ENCODE measurements at regions of chr6 and their contacts with region 1.

Region 1: GRCh38 chr6:41779793-41780545 is at the start of gene FRS3:
- DNase-seq: peak; percentile 90
- H3K4me3 Mint-ChIP-seq: peak within 1 kb of the TSS; percentile 90
- H3K27ac Mint-ChIP-seq: no peak within 1 kb of the TSS
- H3K4me1 Mint-ChIP-seq: peaks cover 23% of the 10 kb centered on the region
- H3K27me3 Mint-ChIP-seq: no peaks in the 10 kb centered on the region
- CTCF ChIP-seq: peak; percentile 94
- total RNA-seq, gene FRS3: 3.9 and 5.3 TPM in 2 replicates

Region 2: DNA sequence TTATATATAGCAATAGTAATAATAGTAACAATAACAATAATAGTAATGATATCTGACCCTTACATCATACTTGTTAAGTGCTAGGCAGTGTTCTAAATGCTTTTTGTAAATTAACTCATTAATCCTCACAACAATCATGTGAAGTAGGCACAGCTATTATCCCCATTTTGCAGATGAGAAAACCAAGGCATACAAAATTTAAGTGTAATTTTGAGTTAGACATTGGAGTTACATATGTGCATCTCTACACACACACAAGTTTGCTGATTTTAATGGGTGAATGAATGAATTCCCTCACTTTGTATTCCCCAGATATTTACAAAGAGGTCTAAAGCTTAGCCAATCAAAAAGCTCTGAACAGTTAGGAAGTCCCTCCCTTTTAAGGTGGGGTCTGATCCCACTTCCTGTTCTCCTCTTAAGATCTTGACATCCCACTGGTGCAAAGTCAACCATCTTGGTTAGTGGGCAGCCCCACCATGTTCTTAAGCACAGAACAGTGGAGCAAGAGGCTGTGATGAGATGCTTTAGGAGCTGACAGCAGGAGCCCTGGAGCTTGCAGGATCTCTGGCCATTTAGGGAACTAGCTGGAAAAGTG is 319.1 kb before region 1 on chr6:
- CTCF ChIA-PET with region 1: no interaction called
- POLR2A ChIA-PET with region 1: no interaction called
- intact Hi-C with region 1: no loop called
- DNase-seq: no peak
- H3K4me3 Mint-ChIP-seq: no peak overlapping the region
- H3K27ac Mint-ChIP-seq: no peak overlapping the region
- H3K4me1 Mint-ChIP-seq: no peaks in the 10 kb centered on the region
- H3K27me3 Mint-ChIP-seq: peaks cover 36% of the 10 kb centered on the region
- CTCF ChIP-seq: no peak

Region 3: DNA sequence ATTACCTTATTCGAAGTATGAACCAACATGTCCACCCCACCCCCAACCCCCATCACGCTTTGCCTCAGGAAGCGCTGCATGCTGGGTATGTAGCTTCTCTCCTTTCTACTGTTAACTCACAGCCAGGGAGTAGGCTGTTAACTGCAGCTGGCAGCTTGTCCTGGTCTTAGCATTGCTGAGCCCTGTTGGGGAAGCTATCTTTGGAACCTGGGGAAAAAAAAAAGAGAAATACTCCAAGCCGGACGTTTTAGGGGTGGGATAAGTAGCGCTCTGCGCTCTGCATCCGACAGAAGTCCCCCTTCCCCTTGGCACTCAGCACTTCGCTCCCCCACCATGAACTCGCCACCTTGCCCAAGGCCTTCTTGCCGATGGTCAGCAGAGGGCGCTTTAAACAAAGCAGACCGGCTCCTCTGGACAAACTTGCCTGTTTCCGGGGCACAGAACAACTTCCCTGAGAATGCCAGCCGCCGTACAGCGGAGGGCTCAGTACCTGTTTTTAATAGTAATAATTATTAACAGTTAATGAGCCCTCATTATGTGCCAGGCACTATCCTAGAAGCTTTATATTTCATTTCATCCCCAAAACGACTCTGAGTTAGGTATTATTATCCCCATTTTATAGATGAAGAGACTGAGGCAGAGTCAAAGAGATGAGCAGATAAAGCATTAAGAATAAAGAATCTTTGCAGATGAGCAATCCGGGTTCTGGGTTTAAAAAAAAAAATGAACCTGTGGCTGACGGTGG is 176.9 kb before region 1 on chr6:
- CTCF ChIA-PET with region 1: interaction called, 17 read pairs
- POLR2A ChIA-PET with region 1: interaction called, 3 read pairs
- intact Hi-C with region 1: loop called (anchors 1 kb)
- DNase-seq: peak; percentile 87
- H3K4me3 Mint-ChIP-seq: no peak overlapping the region
- H3K27ac Mint-ChIP-seq: no peak overlapping the region
- H3K4me1 Mint-ChIP-seq: peaks cover 5% of the 10 kb centered on the region
- H3K27me3 Mint-ChIP-seq: no peaks in the 10 kb centered on the region
- CTCF ChIP-seq: peak; percentile 90

Region 4: DNA sequence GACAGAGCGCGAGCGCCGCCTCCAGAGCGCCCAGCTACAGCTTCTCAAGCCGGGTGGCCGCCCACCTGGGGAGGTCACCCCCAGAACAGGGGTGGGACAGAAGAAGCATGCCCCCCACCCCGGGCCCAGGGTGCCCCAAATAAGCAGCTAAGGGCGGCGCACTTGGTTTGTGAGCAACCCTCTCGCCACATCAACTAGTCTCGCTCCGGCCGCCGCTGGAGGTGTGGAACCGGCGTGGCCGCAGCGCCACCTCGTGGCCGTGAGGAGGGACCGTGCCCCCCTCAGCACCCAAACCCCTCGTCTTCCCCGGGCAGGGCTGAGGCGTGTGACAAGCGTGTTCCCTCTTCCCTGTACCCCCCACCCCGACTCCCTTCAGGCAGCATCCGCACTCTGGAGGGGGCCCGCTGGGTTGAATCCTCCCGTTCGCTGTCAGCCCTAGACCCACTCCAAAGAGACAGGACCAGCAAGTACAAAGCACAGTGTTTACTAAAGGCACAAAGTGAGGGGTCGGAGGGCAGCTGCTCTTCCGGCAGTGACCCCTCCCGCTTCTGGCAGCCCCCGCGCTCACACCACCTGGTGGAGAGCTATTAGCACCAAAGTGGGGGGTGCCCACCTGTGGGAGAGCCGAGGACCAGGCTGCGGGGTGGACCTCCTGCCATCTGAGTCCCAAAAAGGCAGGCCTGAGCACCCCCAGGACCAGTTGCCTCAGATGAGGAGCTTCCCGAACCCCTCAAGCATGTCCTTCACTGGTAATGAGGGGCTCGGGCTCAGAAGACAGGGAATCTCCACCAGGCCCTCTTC is 96.3 kb before region 1 on chr6:
- CTCF ChIA-PET with region 1: interaction called, 4 read pairs
- POLR2A ChIA-PET with region 1: no interaction called
- intact Hi-C with region 1: loop called (anchors 5 kb)
- DNase-seq: peak; percentile 65
- H3K4me3 Mint-ChIP-seq: no peak overlapping the region
- H3K27ac Mint-ChIP-seq: no peak overlapping the region
- H3K4me1 Mint-ChIP-seq: no peaks in the 10 kb centered on the region
- H3K27me3 Mint-ChIP-seq: no peaks in the 10 kb centered on the region
- CTCF ChIP-seq: peak; percentile 68

Region 5: DNA sequence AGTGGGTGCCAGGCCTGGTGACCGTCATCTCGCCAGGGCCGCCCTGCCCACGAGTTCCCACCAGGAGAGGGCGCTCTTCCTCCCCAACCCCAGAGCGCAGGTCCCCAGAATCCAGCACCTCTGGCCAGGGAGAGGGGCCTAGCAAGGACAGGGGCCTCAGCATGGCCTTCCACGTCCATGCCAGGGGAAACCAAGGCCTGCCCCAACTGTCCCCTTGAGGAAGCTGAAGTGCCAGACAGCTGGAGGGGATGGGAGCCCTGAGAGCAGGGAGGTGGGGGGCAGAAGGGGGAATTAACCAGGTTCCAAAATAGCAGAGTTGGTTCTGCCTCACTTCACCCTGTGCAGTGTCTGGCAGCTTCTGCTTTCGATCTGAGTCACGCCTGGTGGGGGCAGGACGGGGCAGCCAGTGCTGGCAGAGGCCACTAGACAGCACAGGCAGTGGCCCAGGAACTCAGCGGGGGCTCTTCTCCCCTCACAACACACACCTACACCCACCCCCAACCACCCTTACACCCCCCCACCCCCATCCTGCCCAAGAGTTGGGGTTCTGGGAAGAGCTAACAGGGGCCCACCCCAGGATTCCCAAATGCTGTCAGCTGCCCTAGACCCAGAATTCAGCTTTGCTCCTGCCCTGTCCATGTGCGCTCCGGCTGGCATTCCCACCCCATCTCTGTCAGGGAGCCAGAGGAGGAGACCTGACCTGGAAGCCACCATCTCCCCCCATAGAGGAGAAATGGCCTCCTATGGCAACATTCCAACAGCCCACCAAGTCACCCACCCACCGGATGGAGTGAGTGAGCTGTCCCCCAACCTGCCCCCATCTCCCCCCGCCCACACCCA is 73.8 kb before region 1 on chr6:
- CTCF ChIA-PET with region 1: interaction called, 18 read pairs
- POLR2A ChIA-PET with region 1: interaction called, 3 read pairs
- intact Hi-C with region 1: loop called (anchors 1 kb)
- DNase-seq: peak; percentile 79
- H3K4me3 Mint-ChIP-seq: peak overlapping the region; percentile 46
- H3K27ac Mint-ChIP-seq: peak overlapping the region; percentile 84
- H3K4me1 Mint-ChIP-seq: peaks cover 36% of the 10 kb centered on the region
- H3K27me3 Mint-ChIP-seq: no peaks in the 10 kb centered on the region
- CTCF ChIP-seq: peak; percentile 73

Region 6: GRCh38 chr6:41741625-41742489 is 38.1 kb before region 1 on chr6:
- CTCF ChIA-PET with region 1: interaction called, 10 read pairs
- POLR2A ChIA-PET with region 1: no interaction called
- intact Hi-C with region 1: no loop called
- DNase-seq: peak; percentile 24
- H3K4me3 Mint-ChIP-seq: no peak overlapping the region
- H3K27ac Mint-ChIP-seq: no peak overlapping the region
- H3K4me1 Mint-ChIP-seq: peaks cover 6% of the 10 kb centered on the region
- H3K27me3 Mint-ChIP-seq: no peaks in the 10 kb centered on the region
- CTCF ChIP-seq: no peak